ENCODE measurements at regions of chr10 and their contacts with region 1.

Region 1: DNA sequence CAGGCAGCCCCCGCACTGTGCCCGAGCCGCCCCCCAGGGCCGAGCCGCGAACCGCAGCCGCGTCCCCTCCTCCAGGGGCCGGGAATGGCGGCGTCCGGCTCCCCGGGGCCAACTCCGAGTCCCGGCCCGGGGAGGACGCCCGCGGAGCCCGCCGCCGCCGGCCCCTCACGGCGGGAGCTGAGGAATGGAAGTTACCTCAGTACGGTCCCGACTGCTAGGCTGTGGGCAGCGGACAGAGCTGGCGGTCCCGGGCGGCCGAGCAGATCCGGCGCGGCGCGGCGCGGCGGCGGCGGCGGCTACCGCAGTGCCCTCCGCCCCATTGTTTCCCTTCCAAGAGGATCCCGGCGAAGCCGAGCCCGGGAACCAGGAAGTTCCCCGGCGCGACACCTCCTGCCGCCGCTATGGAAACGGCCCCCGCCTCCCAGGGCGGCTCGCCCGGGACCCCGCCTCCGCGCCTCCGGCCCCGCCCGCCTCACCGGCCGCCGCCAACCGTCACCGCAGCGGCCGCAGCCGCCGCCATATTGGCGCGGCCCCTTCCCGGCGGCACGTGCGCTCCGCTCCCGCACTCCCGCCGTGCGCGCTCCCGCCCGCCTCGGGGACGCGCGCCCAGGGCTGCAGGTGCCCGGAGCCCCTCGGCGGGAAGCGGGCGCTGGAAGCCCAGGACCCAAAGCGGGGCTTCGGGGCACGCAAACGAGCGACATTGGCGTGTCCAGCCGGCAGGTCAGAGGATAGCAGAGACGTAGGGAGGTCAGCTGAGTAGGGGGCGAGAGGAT is at the start of gene USP6NL:
- DNase-seq: peak; percentile 75 to 76
- ATAC-seq: peak; percentile 87 to 94
- H3K4me3 ChIP-seq: peak within 1 kb of the TSS; percentile 69 to 86 (median 80)
- H3K27ac ChIP-seq: peak within 1 kb of the TSS; percentile 71 to 82 (median 76)
- H3K4me1 ChIP-seq: peaks cover 9 to 11% of the 10 kb centered on the region in 2 donors
- H3K27me3 ChIP-seq: no peaks in the 10 kb centered on the region
- CTCF ChIP-seq: no peak
- POLR2A ChIP-seq: peak; percentile 26 to 60
- total RNA-seq, gene USP6NL: 5.6 to 6.2 (median 5.9) TPM

Region 2: GRCh38 chr10:11655836-11656235 is 44.4 kb after region 1 on chr10:
- in situ Hi-C with region 1: no loop called
- intact Hi-C with region 1: no loop called
- DNase-seq: no peak
- ATAC-seq: no peak
- H3K4me3 ChIP-seq: no peak overlapping the region
- H3K27ac ChIP-seq: no peak overlapping the region
- H3K4me1 ChIP-seq: no peaks in the 10 kb centered on the region
- H3K27me3 ChIP-seq: no peaks in the 10 kb centered on the region
- CTCF ChIP-seq: no peak
- POLR2A ChIP-seq: no peak

Region 3: DNA sequence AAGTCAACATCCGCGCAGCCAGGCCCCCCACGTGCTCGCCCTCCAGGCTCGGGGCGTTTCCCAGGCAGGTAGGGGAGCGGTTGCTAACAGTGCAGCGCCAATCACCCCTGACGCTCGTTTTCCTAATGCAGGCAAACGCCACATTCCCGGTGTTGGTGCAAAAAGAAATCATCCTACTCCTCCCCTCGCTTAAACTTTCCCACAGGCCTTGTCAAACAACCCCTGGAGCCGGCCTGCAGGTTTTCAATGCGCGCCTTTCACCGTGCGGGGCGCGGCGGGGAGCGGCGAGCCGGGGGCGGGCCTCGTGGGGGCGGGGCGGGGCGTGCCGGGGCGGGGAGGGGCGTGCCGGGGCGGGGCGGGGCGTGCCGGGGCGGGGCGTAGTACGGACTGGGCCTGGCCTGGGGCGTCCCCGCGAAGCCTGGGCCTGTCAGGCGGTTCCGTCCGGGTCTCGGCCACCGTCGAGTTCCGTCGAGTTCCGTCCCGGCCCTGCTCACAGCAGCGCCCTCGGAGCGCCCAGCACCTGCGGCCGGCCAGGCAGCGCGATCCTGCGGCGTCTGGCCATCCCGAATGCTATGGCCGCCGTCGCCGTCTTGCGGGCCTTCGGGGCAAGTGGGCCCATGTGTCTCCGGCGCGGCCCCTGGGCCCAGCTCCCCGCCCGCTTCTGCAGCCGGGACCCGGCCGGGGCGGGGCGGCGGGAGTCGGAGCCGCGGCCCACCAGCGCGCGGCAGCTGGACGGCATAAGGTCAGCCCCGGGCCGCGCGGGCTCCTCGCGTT is 130.8 kb after region 1 on chr10 and contains the start of gene ECHDC3:
- in situ Hi-C with region 1: no loop called
- intact Hi-C with region 1: loop called (anchors 5 kb)
- DNase-seq: peak; percentile 71 to 72
- ATAC-seq: peak; percentile 61 to 65
- H3K4me3 ChIP-seq: peak within 1 kb of the TSS; percentile 72 to 86 (median 78)
- H3K27ac ChIP-seq: peak within 1 kb of the TSS; percentile 93 to 96 (median 94)
- H3K4me1 ChIP-seq: peaks cover 28 to 34% of the 10 kb centered on the region in 2 donors
- H3K27me3 ChIP-seq: no peaks in the 10 kb centered on the region
- CTCF ChIP-seq: no peak
- POLR2A ChIP-seq: peak; percentile 83 to 86
- total RNA-seq, gene ECHDC3: 465 to 605 (median 490) TPM

Region 4: GRCh38 chr10:11823122-11823988 is 211.9 kb after region 1 on chr10 and contains the start of gene PROSER2:
- in situ Hi-C with region 1: no loop called
- intact Hi-C with region 1: loop called (anchors 2 kb)
- DNase-seq: no peak
- ATAC-seq: peak; percentile 55 to 64
- H3K4me3 ChIP-seq: peak within 1 kb of the TSS; percentile 49 to 59 (median 54)
- H3K27ac ChIP-seq: peak within 1 kb of the TSS in 2 of 4 donors; percentile 38 to 45
- H3K4me1 ChIP-seq: no peaks in the 10 kb centered on the region
- H3K27me3 ChIP-seq: peaks cover 6 to 18% (median 15%) of the 10 kb centered on the region in 3 donors
- CTCF ChIP-seq: no peak
- POLR2A ChIP-seq: peak in 1 of 2 donors; percentile 48
- total RNA-seq, gene PROSER2: 0.88 to 3.4 (median 1.4) TPM

Region 5: DNA sequence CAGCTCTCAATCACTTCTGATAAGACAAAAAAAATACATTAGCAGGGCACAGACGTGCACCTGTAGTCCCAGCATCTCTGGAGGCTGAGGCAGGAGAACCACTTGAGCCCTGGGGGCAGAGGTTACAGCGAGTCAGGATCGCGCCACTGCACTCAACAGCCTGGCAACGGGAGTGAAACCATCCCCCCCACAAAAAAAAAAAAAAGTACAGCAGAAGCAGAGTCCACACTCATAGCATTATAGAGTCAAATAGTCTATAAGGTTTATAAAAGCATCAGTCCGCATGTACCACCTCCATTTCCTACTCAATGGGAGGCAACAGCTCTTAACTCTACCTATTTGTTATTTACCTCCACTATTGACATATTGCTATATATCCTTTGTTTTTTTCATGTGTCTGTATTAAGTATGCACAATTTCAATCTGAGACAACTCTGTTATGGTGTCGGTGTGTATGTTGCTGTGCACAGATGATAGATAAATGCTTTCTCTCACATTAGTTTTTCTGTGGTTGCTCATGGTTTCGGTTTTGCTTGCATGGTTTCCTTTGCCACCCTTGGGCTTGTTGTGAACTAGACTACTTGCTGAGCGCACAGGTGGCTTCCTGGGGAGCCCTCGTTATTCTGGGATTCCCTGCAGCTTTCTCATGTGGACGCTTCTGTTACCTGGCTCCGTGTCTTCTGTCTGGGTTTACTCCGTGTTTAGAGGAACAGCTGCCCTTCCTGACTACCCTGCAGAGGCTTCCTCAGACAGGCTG is 252.1 kb after region 1 on chr10:
- in situ Hi-C with region 1: no loop called
- intact Hi-C with region 1: no loop called
- DNase-seq: no peak
- ATAC-seq: no peak
- H3K4me3 ChIP-seq: no peak overlapping the region
- H3K27ac ChIP-seq: no peak overlapping the region
- H3K4me1 ChIP-seq: no peaks in the 10 kb centered on the region
- H3K27me3 ChIP-seq: no peaks in the 10 kb centered on the region
- CTCF ChIP-seq: no peak
- POLR2A ChIP-seq: no peak

Region 6: GRCh38 chr10:12782537-12782936 is 1171.1 kb after region 1 on chr10:
- in situ Hi-C with region 1: no loop called
- intact Hi-C with region 1: no loop called
- DNase-seq: no peak
- ATAC-seq: peak in 1 of 2 donors; percentile 10
- H3K4me3 ChIP-seq: no peak overlapping the region
- H3K27ac ChIP-seq: no peak overlapping the region
- H3K4me1 ChIP-seq: no peaks in the 10 kb centered on the region
- H3K27me3 ChIP-seq: peaks cover 0 to 9% (median 0%) of the 10 kb centered on the region in 3 donors
- CTCF ChIP-seq: peak; percentile 53 to 77 (median 67)
- POLR2A ChIP-seq: no peak

Measured in gastrocnemius medialis (tissue), 4 donors.